ENCODE measurements at regions of chr15 and their contacts with region 1.

Region 1: DNA sequence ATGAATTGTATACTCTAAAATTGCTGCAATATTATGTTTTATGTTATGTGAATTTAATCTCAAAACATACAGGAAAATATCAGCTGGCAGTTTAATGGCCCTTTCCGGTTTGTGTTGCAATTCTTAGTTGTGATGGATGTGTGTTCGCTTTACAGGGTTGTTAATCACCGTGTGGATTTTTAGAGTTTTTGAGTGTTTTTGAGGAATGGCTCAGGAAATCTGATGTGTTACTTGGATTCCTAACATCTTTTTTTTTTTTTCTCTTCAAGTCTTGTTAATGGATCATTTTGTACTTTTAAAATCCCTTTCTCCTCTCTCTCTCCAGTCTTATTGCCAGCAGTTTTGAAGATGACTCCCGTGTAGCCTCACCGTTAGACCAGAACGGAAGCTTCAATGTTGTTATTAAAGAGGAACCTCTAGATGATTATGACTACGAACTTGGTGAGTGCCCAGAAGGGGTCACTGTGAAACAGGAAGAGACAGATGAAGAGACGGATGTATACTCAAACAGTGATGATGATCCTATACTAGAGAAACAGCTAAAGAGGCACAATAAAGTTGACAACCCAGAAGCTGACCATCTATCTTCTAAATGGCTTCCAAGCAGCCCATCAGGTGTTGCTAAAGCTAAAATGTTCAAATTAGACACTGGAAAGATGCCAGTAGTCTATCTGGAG is 35.7 kb downstream of the MGA start:
- DNase-seq: peak; percentile 34
- H3K4me3 Mint-ChIP-seq: peak overlapping the region; percentile 28
- H3K27ac Mint-ChIP-seq: peak overlapping the region; percentile 81
- H3K4me1 Mint-ChIP-seq: peaks cover 38% of the 10 kb centered on the region
- H3K27me3 Mint-ChIP-seq: no peaks in the 10 kb centered on the region

Region 2: DNA sequence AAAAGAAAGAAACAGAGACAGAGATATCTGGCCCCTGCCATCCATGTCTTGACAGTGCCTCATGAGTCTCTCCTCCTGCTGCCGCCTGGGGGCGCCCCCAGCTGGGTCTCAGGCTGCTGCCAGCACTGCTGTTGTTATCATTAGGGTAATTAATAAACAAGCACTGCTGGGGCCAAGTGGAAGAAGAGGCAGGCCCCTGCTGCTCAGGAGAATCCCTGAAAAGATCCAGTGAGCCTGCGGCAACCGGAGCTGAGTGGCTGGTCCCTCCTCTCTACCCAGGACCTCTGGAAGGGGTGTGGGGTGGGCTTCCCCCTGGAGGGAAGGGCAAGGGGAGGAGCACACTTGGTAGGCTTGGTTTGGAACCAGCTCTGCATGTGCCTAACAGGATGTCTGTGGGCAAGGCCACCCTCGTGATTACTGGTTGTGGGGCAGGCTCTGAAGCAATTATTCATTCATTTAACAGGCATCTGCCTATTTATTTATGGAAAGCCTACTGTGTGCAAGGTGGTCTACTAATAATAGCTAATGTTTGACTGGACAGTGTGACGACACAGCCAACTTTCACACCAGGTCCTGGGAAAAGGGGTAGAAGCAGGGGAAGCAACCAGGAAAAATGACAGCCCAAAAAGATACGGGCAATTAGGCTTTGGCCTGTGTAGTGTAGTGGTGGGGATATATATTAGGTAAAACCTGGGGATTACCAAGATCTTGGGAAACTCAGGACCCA is 138.1 kb before region 1 on chr15:
- intact Hi-C with region 1: loop called (anchors 2 kb)
- DNase-seq: peak; percentile 43
- H3K4me3 Mint-ChIP-seq: peak overlapping the region; percentile 92
- H3K27ac Mint-ChIP-seq: peak overlapping the region; percentile 89
- H3K4me1 Mint-ChIP-seq: peaks cover 19% of the 10 kb centered on the region
- H3K27me3 Mint-ChIP-seq: peaks cover 46% of the 10 kb centered on the region

Region 3: GRCh38 chr15:41603941-41604911 is 91.7 kb before region 1 on chr15:
- intact Hi-C with region 1: loop called (anchors 5 kb)
- DNase-seq: peak; percentile 27
- H3K4me3 Mint-ChIP-seq: peak overlapping the region; percentile 68
- H3K27ac Mint-ChIP-seq: no peak overlapping the region
- H3K4me1 Mint-ChIP-seq: peaks cover 11% of the 10 kb centered on the region
- H3K27me3 Mint-ChIP-seq: peaks cover 34% of the 10 kb centered on the region

Region 4: DNA sequence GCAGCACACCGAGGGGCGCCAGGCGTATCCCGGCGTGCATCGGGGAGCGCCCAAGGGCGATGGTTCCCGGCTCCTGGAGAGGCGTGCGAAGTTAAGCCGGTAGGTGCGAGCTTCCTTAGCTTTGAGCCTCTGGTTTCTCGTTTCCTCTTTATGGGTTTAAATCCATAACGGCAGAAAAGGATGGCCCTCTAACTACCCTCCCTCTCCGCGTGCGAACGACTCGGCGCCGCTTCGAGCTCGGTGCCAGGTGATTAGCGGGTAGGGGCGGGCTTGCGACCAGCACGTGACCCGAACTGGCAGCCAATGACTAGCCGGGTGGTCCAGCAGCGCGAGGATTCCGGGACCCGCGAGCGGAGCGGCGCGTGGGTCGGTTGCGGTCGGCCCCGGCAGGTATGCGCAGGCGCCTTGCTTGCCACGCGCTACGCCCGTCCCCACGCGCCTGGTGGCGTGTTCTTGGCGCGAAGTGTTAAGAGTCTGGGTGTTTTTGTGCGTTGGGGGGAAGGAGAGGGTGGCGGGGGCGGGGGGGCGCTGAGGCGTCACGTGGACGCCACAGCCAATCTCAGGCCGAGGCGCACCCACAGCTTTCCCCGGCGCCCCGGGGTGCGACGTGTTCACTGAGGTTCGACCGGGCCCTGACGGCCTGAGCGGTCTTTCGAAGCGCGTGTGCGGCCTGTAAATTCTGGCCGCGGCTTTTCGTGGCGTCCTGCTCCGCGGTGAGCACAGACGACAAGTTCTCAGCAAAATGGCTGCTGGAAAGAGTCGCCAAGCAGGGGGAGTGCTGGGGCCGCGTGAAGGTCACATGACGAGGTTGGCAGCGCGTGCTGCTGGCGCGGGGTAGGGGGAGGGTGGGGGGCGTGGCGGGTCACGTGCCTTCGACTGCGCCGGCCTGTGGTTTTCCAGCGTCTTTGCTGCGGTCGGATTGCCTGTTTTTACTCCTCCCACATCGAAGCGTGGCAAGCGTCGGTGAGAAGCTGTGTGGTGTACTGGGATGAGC is 74.4 kb before region 1 on chr15:
- intact Hi-C with region 1: loop called (anchors 1 kb)
- DNase-seq: peak; percentile 70
- H3K4me3 Mint-ChIP-seq: peak overlapping the region; percentile 78
- H3K27ac Mint-ChIP-seq: peak overlapping the region; percentile 81
- H3K4me1 Mint-ChIP-seq: peaks cover 12% of the 10 kb centered on the region
- H3K27me3 Mint-ChIP-seq: peaks cover 22% of the 10 kb centered on the region

Region 5: DNA sequence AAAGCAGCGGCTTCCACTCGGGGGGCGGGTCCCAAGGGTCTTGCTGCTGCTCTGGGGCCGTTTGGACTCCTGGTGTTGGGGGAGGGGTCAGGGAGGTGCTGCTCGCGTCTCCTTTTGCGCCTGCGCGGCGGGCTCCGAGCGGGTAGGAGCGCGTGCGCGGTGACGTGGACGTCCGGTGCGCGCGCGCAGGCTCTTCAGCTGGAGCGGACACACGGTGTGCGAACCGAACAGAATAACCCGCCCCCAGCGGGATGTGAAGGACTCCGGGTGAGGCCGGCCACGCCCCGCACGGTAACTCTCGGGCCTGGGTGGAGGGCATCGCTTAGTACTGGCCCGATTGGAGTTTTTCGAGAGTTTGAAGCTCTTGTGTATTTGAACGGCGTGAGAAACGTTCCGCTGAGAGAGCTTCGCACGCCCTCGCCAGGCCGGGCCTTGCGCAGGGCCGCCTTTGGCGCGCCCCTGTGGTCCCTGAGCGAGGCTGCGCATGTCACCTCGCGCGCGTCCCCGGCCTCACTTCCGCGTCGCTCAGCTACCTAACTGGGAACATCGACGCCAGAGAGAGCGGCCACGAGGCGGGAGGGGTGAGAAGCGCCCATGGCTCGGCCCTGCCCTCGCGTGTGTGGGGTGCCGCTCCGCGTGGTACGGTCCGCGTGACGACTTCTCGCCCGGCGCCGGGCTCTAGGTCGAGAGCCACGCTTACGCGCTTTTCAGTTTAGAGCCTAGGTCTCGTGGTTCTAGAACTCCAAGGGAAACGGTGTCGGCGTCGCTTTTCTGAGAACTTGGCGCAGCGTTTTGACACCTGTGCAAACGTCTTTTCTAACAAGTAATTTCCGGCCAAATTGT is 35.4 kb before region 1 on chr15 and contains the start of gene MGA:
- intact Hi-C with region 1: loop called (anchors 1 kb)
- DNase-seq: peak; percentile 88
- H3K4me3 Mint-ChIP-seq: peak within 1 kb of the TSS; percentile 90
- H3K27ac Mint-ChIP-seq: peak within 1 kb of the TSS; percentile 91
- H3K4me1 Mint-ChIP-seq: peaks cover 37% of the 10 kb centered on the region
- H3K27me3 Mint-ChIP-seq: peaks cover 28% of the 10 kb centered on the region
- total RNA-seq, gene MGA: 37.5 and 38.8 TPM in 2 replicates

Region 6: DNA sequence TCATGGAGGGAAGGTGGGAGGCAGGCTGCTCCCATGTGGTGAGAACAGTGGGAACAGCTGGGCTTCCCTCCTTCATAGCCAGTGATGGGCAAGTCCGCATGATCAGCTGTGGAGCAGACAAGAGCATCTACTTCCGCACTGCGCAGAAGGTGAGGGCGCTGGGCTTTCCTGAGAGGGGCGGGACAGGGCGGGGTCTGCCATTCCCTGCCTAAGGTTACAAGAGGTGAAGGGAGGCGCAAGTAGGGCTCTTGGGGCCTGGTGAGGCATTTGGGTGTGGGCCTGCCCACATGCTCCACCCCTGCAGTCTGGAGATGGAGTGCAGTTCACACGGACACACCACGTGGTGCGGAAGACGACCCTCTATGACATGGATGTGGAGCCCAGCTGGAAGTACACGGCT is 121.4 kb after region 1 on chr15:
- intact Hi-C with region 1: no loop called
- DNase-seq: no peak
- H3K4me3 Mint-ChIP-seq: no peak overlapping the region
- H3K27ac Mint-ChIP-seq: no peak overlapping the region
- H3K4me1 Mint-ChIP-seq: no peaks in the 10 kb centered on the region
- H3K27me3 Mint-ChIP-seq: no peaks in the 10 kb centered on the region

Region 7: GRCh38 chr15:41904541-41905005 is 208.7 kb after region 1 on chr15:
- intact Hi-C with region 1: loop called (anchors 10 kb)
- DNase-seq: peak; percentile 50
- H3K4me3 Mint-ChIP-seq: no peak overlapping the region
- H3K27ac Mint-ChIP-seq: no peak overlapping the region
- H3K4me1 Mint-ChIP-seq: peaks cover 8% of the 10 kb centered on the region
- H3K27me3 Mint-ChIP-seq: no peaks in the 10 kb centered on the region